ENCODE measurements at regions of chr19 and their contacts with region 1.

Region 1: GRCh38 chr19:47124937-47125668 is 5.5 kb upstream of the SAE1 start:
- DNase-seq: no peak
- ATAC-seq: peak; percentile 50 to 82 (median 76)
- H3K4me3 ChIP-seq: no peak overlapping the region
- H3K27ac ChIP-seq: no peak overlapping the region
- H3K4me1 ChIP-seq: peaks cover 0 to 4% (median 0%) of the 10 kb centered on the region in 9 donors
- H3K27me3 ChIP-seq: no peaks in the 10 kb centered on the region
- CTCF ChIP-seq: peak; percentile 61 to 82 (median 71)

Region 2: GRCh38 chr19:47013041-47013517 is 112.0 kb before region 1 on chr19:
- intact Hi-C with region 1: loop called in 3 of 10 experiments (anchors 2 to 5 kb)
- DNase-seq: peak; percentile 81 to 87
- ATAC-seq: peak; percentile 89 to 97 (median 96)
- H3K4me3 ChIP-seq: no peak overlapping the region
- H3K27ac ChIP-seq: no peak overlapping the region
- H3K4me1 ChIP-seq: peaks cover 0 to 9% (median 4%) of the 10 kb centered on the region in 9 donors
- H3K27me3 ChIP-seq: peaks cover 0 to 11% (median 0%) of the 10 kb centered on the region in 7 donors
- CTCF ChIP-seq: peak; percentile 98 to 100 (median 99)

Region 3: GRCh38 chr19:47075179-47075810 is 49.8 kb before region 1 on chr19:
- intact Hi-C with region 1: loop called (anchors 1 to 5 kb)
- DNase-seq: no peak
- ATAC-seq: peak in 2 of 8 donors; percentile 10 to 24
- H3K4me3 ChIP-seq: no peak overlapping the region
- H3K27ac ChIP-seq: no peak overlapping the region
- H3K4me1 ChIP-seq: peaks cover 0 to 23% (median 6%) of the 10 kb centered on the region in 9 donors
- H3K27me3 ChIP-seq: no peaks in the 10 kb centered on the region
- CTCF ChIP-seq: no peak

Region 4: DNA sequence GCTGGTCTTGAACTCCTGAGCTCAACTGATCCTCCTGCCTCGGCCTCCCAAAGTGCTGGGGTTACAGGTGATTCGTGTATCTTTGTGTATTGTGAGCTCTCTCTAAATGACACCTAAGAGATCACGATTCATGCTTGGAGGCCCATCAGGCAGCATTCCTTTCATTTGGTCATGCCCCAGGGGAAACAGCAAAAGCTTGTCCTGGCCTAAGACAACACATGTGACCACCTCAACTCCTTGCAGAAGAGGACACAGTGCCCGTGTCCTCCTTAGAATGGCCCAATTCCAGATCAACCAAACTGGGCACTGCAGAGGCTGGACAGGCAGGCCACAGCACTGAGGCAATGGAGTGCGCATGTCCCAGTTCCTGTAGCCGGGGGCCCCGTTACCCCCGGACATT is 44.0 kb before region 1 on chr19:
- intact Hi-C with region 1: loop called (anchors 1 to 5 kb)
- DNase-seq: no peak
- ATAC-seq: no peak
- H3K4me3 ChIP-seq: no peak overlapping the region
- H3K27ac ChIP-seq: no peak overlapping the region
- H3K4me1 ChIP-seq: peaks cover 0 to 9% (median 6%) of the 10 kb centered on the region in 9 donors
- H3K27me3 ChIP-seq: no peaks in the 10 kb centered on the region
- CTCF ChIP-seq: no peak